Activated CD4-positive, alpha-beta memory T cell treated with anti-CD3 and anti-CD28 coated beads, Interleukin-2, amount 10 ng/mL, durations not matched to agents 7 days and 5 days (primary cell): ENCODE measurements at regions of chr5 and their contacts with region 1.

Region 1: DNA sequence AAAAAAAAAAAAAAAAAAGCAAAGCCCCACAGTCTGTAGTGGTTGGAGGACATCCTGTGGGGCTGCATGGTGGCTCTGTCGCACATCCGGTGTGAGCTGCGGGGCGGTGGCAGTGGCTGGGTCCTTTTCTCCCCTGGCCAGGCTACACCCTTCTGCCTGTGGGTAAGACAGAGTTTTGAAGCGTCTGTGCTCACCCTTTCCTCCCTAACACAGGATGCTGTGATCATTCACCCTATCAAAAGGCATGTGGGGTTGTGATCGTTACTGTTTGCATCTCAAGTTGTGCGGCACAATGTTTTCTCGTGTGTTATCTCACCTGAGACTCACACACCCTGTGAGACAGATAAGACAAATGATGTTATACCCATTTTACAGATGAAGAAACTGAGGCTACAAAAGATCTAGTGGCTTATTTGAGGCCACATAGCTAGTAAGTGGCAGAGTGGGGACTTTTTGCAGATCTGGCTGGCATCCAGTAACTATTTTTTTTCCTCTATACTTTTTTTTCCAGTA is 17.5 kb downstream of the IRF1 start:
- DNase-seq: peak; percentile 94
- H3K4me3 Mint-ChIP-seq: peak overlapping the region; percentile 28
- H3K27ac Mint-ChIP-seq: peak overlapping the region; percentile 94
- H3K4me1 Mint-ChIP-seq: peaks cover 90% of the 10 kb centered on the region
- H3K27me3 Mint-ChIP-seq: no peaks in the 10 kb centered on the region

Region 2: GRCh38 chr5:132301344-132302271 is 171.5 kb before region 1 on chr5:
- CTCF ChIA-PET with region 1: no interaction called
- POLR2A ChIA-PET with region 1: no interaction called
- DNase-seq: no peak
- H3K4me3 Mint-ChIP-seq: no peak overlapping the region
- H3K27ac Mint-ChIP-seq: no peak overlapping the region
- H3K4me1 Mint-ChIP-seq: peaks cover 7% of the 10 kb centered on the region
- H3K27me3 Mint-ChIP-seq: peaks cover 2% of the 10 kb centered on the region

Region 3: GRCh38 chr5:132369474-132370180 is 103.4 kb before region 1 on chr5 and contains the start of gene SLC22A5:
- CTCF ChIA-PET with region 1: no interaction called
- POLR2A ChIA-PET with region 1: no interaction called
- DNase-seq: peak; percentile 73
- H3K4me3 Mint-ChIP-seq: peak within 1 kb of the TSS; percentile 71
- H3K27ac Mint-ChIP-seq: no peak within 1 kb of the TSS
- H3K4me1 Mint-ChIP-seq: peaks cover 19% of the 10 kb centered on the region
- H3K27me3 Mint-ChIP-seq: no peaks in the 10 kb centered on the region
- total RNA-seq, gene SLC22A5: 2.7 to 3.3 TPM

Region 4: GRCh38 chr5:132386644-132387286 is 86.3 kb before region 1 on chr5:
- CTCF ChIA-PET with region 1: interaction called, 17 read pairs
- POLR2A ChIA-PET with region 1: interaction called, 9 read pairs
- DNase-seq: peak; percentile 83
- H3K4me3 Mint-ChIP-seq: no peak overlapping the region
- H3K27ac Mint-ChIP-seq: peak overlapping the region; percentile 31
- H3K4me1 Mint-ChIP-seq: peaks cover 52% of the 10 kb centered on the region
- H3K27me3 Mint-ChIP-seq: no peaks in the 10 kb centered on the region

Region 5: GRCh38 chr5:132410451-132411381 is 62.4 kb before region 1 on chr5:
- CTCF ChIA-PET with region 1: interaction called, 4 read pairs
- POLR2A ChIA-PET with region 1: interaction called, 94 read pairs
- DNase-seq: peak; percentile 89
- H3K4me3 Mint-ChIP-seq: peak overlapping the region; percentile 95
- H3K27ac Mint-ChIP-seq: peak overlapping the region; percentile 99
- H3K4me1 Mint-ChIP-seq: peaks cover 59% of the 10 kb centered on the region
- H3K27me3 Mint-ChIP-seq: no peaks in the 10 kb centered on the region

Region 6: DNA sequence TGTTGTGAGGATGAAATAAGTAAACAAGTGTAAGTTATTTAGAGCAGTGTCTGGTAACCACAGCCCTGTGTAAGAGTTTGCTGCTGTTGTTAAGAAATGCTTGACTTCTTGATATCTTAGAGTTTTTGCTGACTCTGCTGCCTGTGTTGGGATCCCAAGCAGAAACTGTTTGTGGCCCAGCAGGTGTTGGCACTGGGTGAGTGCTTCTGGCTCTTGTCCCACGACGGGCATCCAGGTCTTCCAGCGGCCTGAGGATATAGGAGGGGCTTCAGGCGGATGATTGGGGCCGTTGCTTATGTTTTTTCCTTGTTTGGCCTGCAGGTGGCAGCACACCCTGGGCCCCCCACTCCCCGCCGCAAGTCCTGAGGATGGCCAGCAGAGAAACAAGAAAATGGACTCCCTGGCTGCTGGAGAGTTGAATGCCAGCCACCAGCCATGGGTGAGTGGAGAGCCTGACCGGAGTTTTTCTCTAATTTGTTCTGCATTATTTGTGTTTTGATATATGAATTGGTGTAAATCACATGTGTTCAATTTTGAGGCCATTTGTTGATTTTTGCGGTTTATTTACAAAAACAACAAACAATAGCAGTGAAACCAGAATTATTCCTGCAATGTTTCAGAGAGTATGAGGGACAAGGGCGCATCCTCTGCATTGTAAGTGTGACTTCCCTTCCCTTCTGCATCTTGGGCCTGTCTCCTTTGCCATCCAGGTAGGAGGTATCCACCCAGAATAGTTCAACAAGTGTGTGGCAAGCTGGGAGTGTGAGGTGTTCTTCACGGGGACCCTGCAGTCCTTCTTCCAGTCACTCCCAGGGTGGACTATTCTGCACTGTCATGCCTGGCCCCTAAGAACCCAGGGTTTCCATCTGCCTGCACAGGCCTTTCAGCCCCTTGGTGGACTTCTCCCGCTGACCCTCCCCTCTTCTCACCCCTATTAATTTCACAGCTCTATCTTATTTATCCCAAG is 53.3 kb before region 1 on chr5:
- CTCF ChIA-PET with region 1: interaction called, 111 read pairs
- POLR2A ChIA-PET with region 1: interaction called, 1,155 read pairs
- DNase-seq: peak; percentile 72
- H3K4me3 Mint-ChIP-seq: peak overlapping the region; percentile 65
- H3K27ac Mint-ChIP-seq: peak overlapping the region; percentile 91
- H3K4me1 Mint-ChIP-seq: peaks cover 95% of the 10 kb centered on the region
- H3K27me3 Mint-ChIP-seq: no peaks in the 10 kb centered on the region

Region 7: DNA sequence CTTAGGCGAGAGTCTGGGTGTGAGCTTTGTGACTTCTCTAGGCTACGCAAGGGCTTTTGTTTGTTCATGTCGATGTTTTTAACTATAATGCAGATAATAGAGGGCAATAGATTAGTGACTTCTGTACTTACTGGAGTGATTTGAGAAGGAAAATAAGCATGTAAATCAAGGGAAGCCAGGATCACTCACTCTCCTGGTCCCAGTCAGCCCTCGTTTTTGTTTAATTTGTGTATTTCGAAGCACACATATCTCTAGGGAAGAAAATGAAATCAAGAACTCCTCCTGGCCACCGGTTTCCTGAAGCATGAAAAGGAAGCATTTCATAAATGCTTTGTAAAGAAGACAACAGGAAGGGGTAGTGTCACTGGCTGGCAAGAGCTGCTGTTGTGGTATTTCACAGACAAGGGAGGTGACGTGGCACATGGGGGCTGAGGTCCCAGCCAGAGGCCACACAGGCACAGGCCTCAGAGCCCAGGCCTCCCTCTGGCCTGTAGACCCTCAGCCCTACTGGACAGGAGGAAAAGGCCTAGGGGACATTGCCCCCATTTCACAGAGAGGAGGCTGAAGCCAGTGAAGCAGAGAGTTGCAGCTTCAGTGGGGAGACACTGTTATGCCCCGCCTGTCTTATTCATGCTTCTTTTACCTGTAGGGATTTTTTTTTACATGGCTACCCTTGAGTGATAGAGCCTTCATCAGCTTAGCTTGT is 16.6 kb before region 1 on chr5:
- CTCF ChIA-PET with region 1: interaction called, 74 read pairs
- POLR2A ChIA-PET with region 1: interaction called, 563 read pairs
- DNase-seq: peak; percentile 75
- H3K4me3 Mint-ChIP-seq: peak overlapping the region; percentile 53
- H3K27ac Mint-ChIP-seq: peak overlapping the region; percentile 99
- H3K4me1 Mint-ChIP-seq: peaks cover 91% of the 10 kb centered on the region
- H3K27me3 Mint-ChIP-seq: no peaks in the 10 kb centered on the region

Region 8: DNA sequence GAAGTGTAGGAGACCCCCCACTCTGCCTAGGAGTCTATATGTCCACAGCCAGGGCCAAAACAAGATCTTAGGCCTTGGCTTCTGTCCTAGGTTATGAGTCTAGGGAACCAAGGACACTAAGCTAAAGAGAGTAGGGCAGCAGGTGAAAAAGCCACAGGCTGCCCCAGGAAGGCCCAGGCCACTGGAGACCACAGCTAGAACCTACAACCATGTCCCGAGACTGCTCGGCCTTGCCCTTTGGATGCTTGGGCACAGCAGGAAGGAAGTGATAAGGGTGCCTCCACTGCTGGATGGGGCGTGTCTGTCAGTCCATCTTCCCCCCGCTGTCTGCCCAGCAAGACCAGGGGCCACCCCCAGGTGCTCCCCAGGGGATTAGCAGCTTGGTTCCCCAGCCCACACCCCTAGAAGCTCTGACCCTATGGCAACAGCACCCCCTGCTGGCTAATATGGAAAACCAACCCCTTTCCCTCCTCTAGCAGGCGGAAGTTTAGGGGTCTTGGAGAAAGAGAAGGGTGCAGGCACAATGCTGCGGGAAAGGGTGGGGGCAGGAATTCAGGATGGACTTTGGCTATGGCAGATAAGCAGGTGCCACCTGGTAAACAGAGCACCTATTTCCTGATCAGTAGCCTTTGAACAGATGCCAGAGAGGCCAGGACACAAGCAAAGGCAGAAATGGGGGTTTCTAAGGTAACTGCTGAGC is 28.0 kb after region 1 on chr5:
- CTCF ChIA-PET with region 1: interaction called, 10 read pairs
- POLR2A ChIA-PET with region 1: interaction called, 1,032 read pairs
- DNase-seq: peak; percentile 78
- H3K4me3 Mint-ChIP-seq: no peak overlapping the region
- H3K27ac Mint-ChIP-seq: no peak overlapping the region
- H3K4me1 Mint-ChIP-seq: peaks cover 39% of the 10 kb centered on the region
- H3K27me3 Mint-ChIP-seq: peaks cover 3% of the 10 kb centered on the region

Region 9: GRCh38 chr5:132561601-132562000 is 88.5 kb after region 1 on chr5:
- CTCF ChIA-PET with region 1: no interaction called
- POLR2A ChIA-PET with region 1: no interaction called
- DNase-seq: peak; percentile 38
- H3K4me3 Mint-ChIP-seq: no peak overlapping the region
- H3K27ac Mint-ChIP-seq: no peak overlapping the region
- H3K4me1 Mint-ChIP-seq: peaks cover 32% of the 10 kb centered on the region
- H3K27me3 Mint-ChIP-seq: no peaks in the 10 kb centered on the region